Gastrocnemius medialis (tissue), 4 donors: ENCODE measurements at regions of chr4 and their contacts with region 1.

Region 1: GRCh38 chr4:176340871-176341685 is 21.3 kb downstream of the SPCS3 start:
- DNase-seq: no peak
- ATAC-seq: peak; percentile 27 to 33
- H3K4me3 ChIP-seq: peak overlapping the region in 3 of 4 donors; percentile 22 to 44 (median 26)
- H3K27ac ChIP-seq: no peak overlapping the region
- H3K4me1 ChIP-seq: peaks cover 0 to 4% of the 10 kb centered on the region in 2 donors
- H3K27me3 ChIP-seq: no peaks in the 10 kb centered on the region
- CTCF ChIP-seq: peak; percentile 19 to 58 (median 42)
- POLR2A ChIP-seq: no peak

Region 2: GRCh38 chr4:175947117-175947722 is 393.9 kb before region 1 on chr4:
- in situ Hi-C with region 1: loop called in 1 of 4 experiments (anchors 25 kb)
- intact Hi-C with region 1: loop called (anchors 10 kb)
- DNase-seq: no peak
- ATAC-seq: no peak
- H3K4me3 ChIP-seq: no peak overlapping the region
- H3K27ac ChIP-seq: no peak overlapping the region
- H3K4me1 ChIP-seq: no peaks in the 10 kb centered on the region
- H3K27me3 ChIP-seq: no peaks in the 10 kb centered on the region
- CTCF ChIP-seq: peak in 4 of 5 experiments; percentile 8 to 56 (median 36)
- POLR2A ChIP-seq: no peak

Region 3: DNA sequence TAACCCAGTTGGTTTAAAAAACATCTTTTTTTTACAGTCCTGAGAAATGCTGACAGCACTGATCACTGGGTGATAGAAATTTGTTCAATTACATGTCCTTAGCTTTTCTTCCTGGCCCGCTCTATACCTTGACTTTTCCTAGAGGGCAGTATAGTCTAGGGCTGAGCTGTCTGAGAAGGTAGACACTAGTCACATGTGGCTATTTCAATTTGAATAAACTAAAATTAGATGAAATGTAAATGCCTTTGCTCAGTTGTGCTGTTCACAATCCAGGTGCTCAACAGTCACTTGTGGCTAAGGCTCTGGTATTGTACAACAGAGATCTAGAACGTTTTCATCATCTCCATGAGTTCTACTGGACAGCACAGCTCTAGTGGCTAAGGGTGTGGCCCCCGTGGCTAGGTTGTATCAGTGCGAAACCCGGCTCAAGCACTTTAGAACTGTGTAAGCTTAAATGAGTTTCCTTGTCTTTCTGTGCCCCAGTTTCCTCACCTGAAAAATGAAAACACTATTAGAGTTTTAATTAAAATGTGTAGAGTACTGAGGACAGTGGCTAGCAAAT is 387.0 kb before region 1 on chr4:
- in situ Hi-C with region 1: loop called in 1 of 4 experiments (anchors 25 kb)
- intact Hi-C with region 1: loop called (anchors 10 kb)
- DNase-seq: no peak
- ATAC-seq: no peak
- H3K4me3 ChIP-seq: no peak overlapping the region
- H3K27ac ChIP-seq: no peak overlapping the region
- H3K4me1 ChIP-seq: no peaks in the 10 kb centered on the region
- H3K27me3 ChIP-seq: no peaks in the 10 kb centered on the region
- CTCF ChIP-seq: no peak
- POLR2A ChIP-seq: no peak

Region 4: DNA sequence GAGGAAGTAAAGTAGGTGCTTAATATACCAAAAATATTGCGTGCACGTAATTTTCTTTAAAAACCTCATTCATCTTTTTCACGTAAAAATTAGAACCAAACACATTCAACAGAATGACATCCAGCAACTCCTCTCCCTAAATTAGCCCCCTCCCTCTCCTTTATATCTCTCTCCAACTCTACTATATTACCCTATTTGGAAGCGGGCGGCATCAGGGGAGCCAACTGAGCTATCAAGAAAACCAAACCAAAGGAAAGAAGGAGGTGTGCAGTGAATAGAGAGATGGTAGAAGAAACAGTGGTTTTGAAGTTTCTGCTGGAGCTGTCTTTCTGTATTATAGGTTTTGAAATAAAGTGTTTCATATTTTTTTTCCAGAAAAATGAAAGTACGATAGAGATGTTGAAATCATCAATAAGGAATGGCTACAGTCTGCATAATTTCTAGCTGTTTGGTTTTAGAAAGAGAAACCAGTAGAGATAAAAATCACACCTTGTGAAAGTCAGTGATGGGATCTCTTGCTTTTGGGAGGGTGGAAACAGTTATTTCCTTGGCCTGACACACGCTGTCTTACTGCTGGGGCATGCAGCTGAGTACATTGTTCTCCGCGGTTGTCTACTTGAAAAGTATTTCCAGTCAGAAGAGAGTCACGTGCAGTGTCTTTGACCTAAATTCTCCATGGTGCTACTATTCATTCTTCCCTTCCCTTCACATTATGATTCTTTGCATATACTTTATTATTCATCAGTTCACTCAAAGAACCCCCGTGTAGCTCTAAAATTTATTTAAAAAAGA is 369.5 kb before region 1 on chr4:
- in situ Hi-C with region 1: no loop called
- intact Hi-C with region 1: no loop called
- DNase-seq: no peak
- ATAC-seq: no peak
- H3K4me3 ChIP-seq: no peak overlapping the region
- H3K27ac ChIP-seq: no peak overlapping the region
- H3K4me1 ChIP-seq: no peaks in the 10 kb centered on the region
- H3K27me3 ChIP-seq: no peaks in the 10 kb centered on the region
- CTCF ChIP-seq: no peak
- POLR2A ChIP-seq: no peak

Region 5: GRCh38 chr4:175983636-175984035 is 357.4 kb before region 1 on chr4:
- in situ Hi-C with region 1: no loop called
- intact Hi-C with region 1: no loop called
- DNase-seq: no peak
- ATAC-seq: no peak
- H3K4me3 ChIP-seq: no peak overlapping the region
- H3K27ac ChIP-seq: no peak overlapping the region
- H3K4me1 ChIP-seq: no peaks in the 10 kb centered on the region
- H3K27me3 ChIP-seq: no peaks in the 10 kb centered on the region
- CTCF ChIP-seq: no peak
- POLR2A ChIP-seq: no peak

Region 6: DNA sequence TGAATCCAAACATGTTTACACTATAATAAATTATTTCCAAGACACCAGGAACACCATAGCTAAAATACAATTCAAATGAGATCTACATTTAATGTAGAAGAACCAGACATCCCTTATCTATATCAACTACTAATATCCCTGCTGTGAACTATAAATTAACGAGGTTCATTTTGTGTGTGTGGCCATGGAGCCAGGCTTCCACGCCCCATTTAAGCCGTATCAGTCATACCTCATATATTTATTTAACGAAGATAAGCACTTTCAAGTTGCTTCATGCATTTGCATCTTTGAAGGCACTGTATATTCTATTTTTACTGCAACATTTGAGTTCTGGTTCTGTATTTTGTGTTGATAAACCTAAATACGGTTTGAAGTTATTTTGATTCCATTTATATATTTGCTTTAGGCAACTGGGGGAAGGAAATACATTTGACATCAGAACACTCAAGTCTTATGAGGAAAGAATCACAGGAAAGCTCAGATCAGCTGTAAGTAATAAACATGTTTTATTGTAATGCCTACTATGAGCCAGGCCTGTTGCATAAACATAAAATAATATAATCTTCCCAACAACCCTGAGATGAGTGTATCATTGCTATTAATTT is 320.5 kb before region 1 on chr4:
- in situ Hi-C with region 1: loop called in 3 of 4 experiments (anchors 10 to 25 kb)
- intact Hi-C with region 1: no loop called
- DNase-seq: no peak
- ATAC-seq: no peak
- H3K4me3 ChIP-seq: no peak overlapping the region
- H3K27ac ChIP-seq: no peak overlapping the region
- H3K4me1 ChIP-seq: no peaks in the 10 kb centered on the region
- H3K27me3 ChIP-seq: no peaks in the 10 kb centered on the region
- CTCF ChIP-seq: no peak
- POLR2A ChIP-seq: no peak

Region 7: GRCh38 chr4:176034499-176034898 is 306.6 kb before region 1 on chr4:
- in situ Hi-C with region 1: loop called in 3 of 4 experiments (anchors 10 to 25 kb)
- intact Hi-C with region 1: loop called (anchors 5 kb)
- DNase-seq: no peak
- ATAC-seq: no peak
- H3K4me3 ChIP-seq: no peak overlapping the region
- H3K27ac ChIP-seq: no peak overlapping the region
- H3K4me1 ChIP-seq: no peaks in the 10 kb centered on the region
- H3K27me3 ChIP-seq: no peaks in the 10 kb centered on the region
- CTCF ChIP-seq: peak; percentile 13 to 38 (median 26)
- POLR2A ChIP-seq: no peak

Region 8: DNA sequence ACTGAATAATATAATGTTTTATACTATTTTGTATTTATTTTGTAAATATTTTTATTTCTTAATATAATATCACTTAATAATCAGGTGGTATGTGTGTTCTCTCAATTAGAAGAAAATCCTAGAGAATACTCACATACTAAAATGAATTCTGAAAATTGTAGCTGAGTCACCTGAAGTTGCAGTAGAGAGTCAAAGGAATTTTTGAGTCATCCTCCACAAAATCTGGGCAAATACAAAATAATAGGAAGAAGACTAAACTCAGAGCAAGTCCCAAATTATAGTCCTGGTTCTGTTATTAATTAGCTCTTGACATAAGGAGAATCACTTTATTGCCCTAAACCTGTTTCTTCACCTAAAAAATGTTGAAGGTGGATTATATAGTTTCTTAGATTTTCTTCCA is 203.4 kb before region 1 on chr4:
- in situ Hi-C with region 1: loop called in 1 of 4 experiments (anchors 25 kb)
- intact Hi-C with region 1: no loop called
- DNase-seq: no peak
- ATAC-seq: no peak
- H3K4me3 ChIP-seq: no peak overlapping the region
- H3K27ac ChIP-seq: no peak overlapping the region
- H3K4me1 ChIP-seq: no peaks in the 10 kb centered on the region
- H3K27me3 ChIP-seq: no peaks in the 10 kb centered on the region
- CTCF ChIP-seq: no peak
- POLR2A ChIP-seq: no peak

Region 9: DNA sequence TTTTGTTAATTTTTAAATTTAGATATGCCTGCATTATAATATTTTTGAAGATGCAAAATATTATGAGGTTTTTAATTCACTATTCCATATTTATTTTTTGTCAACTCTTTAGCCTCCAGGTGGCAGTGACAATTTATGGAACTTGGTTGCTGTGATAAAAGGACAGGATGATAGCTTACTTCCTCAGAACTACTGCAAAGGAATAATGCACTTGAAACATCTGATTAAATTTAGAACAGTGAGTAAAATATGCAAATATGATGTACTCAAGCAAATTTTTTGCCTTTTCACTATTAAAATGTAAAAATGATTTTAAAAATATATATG is 190.8 kb before region 1 on chr4:
- in situ Hi-C with region 1: loop called (anchors 5 to 25 kb)
- intact Hi-C with region 1: loop called (anchors 1 kb)
- DNase-seq: no peak
- ATAC-seq: peak; percentile 74 to 88
- H3K4me3 ChIP-seq: no peak overlapping the region
- H3K27ac ChIP-seq: peak overlapping the region in 3 of 4 donors; percentile 14 to 55 (median 42)
- H3K4me1 ChIP-seq: peaks cover 0 to 2% of the 10 kb centered on the region in 2 donors
- H3K27me3 ChIP-seq: no peaks in the 10 kb centered on the region
- CTCF ChIP-seq: peak; percentile 43 to 60 (median 54)
- POLR2A ChIP-seq: no peak